ENCODE measurements at regions of chr10 and their contacts with region 1.

Region 1: GRCh38 chr10:36899651-36900050 is 225.7 kb upstream of the ANKRD30A start:
- DNase-seq: no peak
- ATAC-seq: no peak
- H3K4me3 ChIP-seq: no peak overlapping the region
- H3K27ac ChIP-seq: no peak overlapping the region
- H3K4me1 ChIP-seq: no peaks in the 10 kb centered on the region
- H3K27me3 ChIP-seq: no peaks in the 10 kb centered on the region
- CTCF ChIP-seq: no peak
- EP300 ChIP-seq: no peak
- POLR2A ChIP-seq: no peak
- RAD21 ChIP-seq: no peak

Region 2: DNA sequence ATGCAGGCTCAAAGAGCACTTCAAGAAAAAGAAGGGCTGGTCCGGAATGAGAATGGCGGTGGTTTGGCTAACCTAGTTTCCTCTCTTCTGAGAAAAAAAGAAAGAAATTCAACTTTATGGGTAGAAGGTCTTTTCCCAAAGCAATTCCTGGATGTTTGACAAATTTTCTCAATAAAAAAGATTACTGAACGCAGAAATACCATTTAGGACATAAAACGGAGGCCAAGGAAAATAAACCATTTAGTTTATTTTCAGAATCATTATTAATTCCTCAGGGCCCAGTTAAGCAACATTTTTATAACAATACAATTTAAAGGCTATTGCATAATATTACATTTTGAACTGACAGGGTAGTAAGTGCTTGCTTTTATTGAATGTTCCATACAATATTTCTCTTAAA is 58.9 kb before region 1 on chr10:
- CTCF ChIA-PET with region 1: no interaction called
- POLR2A ChIA-PET with region 1: no interaction called
- RAD21 ChIA-PET with region 1: no interaction called
- SMC1A ChIA-PET with region 1: no interaction called
- in situ Hi-C with region 1: no loop called
- intact Hi-C with region 1: no loop called
- DNase-seq: no peak
- ATAC-seq: no peak
- H3K4me3 ChIP-seq: no peak overlapping the region
- H3K27ac ChIP-seq: no peak overlapping the region
- H3K4me1 ChIP-seq: no peaks in the 10 kb centered on the region
- H3K27me3 ChIP-seq: no peaks in the 10 kb centered on the region
- CTCF ChIP-seq: no peak
- EP300 ChIP-seq: no peak
- POLR2A ChIP-seq: no peak
- RAD21 ChIP-seq: no peak

Region 3: DNA sequence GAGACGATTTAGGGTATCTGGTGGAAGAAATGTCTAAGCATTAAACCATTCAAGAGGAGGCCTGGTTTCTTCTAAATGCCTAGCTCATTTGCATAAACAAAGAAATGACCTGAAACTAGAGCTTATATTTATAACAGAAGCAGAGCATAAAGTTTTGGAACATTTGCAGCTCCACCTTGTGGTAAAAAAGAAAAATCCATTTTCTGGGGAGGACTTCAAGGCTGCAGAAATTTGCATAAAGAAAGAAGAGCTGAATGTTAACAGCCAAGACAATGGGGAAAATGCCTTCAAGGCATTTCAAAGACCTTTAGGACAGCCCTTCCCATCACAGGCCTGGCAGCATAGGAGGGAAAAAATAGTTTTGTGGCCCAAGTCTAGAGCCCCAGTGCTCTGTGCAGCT is 595.8 kb after region 1 on chr10:
- CTCF ChIA-PET with region 1: interaction called, 10 read pairs
- POLR2A ChIA-PET with region 1: no interaction called
- RAD21 ChIA-PET with region 1: no interaction called
- SMC1A ChIA-PET with region 1: no interaction called
- in situ Hi-C with region 1: no loop called
- intact Hi-C with region 1: no loop called
- DNase-seq: no peak
- ATAC-seq: no peak
- H3K4me3 ChIP-seq: no peak overlapping the region
- H3K27ac ChIP-seq: no peak overlapping the region
- H3K4me1 ChIP-seq: no peaks in the 10 kb centered on the region
- H3K27me3 ChIP-seq: no peaks in the 10 kb centered on the region
- CTCF ChIP-seq: 0 out of 6 replicates have a peak, but pooled peaks of 1 of the 3 experiments have one; percentile 8
- EP300 ChIP-seq: no peak
- POLR2A ChIP-seq: no peak
- RAD21 ChIP-seq: 0 out of 2 replicates have a peak, but pooled peaks have one; percentile 20